Activated CD4-positive, alpha-beta memory T cell treated with anti-CD3 and anti-CD28 coated beads, Interleukin-2, amount 10 ng/mL, durations not matched to agents 7 days and 5 days (primary cell): ENCODE measurements at regions of chr13 and their contacts with region 1.

Region 1: DNA sequence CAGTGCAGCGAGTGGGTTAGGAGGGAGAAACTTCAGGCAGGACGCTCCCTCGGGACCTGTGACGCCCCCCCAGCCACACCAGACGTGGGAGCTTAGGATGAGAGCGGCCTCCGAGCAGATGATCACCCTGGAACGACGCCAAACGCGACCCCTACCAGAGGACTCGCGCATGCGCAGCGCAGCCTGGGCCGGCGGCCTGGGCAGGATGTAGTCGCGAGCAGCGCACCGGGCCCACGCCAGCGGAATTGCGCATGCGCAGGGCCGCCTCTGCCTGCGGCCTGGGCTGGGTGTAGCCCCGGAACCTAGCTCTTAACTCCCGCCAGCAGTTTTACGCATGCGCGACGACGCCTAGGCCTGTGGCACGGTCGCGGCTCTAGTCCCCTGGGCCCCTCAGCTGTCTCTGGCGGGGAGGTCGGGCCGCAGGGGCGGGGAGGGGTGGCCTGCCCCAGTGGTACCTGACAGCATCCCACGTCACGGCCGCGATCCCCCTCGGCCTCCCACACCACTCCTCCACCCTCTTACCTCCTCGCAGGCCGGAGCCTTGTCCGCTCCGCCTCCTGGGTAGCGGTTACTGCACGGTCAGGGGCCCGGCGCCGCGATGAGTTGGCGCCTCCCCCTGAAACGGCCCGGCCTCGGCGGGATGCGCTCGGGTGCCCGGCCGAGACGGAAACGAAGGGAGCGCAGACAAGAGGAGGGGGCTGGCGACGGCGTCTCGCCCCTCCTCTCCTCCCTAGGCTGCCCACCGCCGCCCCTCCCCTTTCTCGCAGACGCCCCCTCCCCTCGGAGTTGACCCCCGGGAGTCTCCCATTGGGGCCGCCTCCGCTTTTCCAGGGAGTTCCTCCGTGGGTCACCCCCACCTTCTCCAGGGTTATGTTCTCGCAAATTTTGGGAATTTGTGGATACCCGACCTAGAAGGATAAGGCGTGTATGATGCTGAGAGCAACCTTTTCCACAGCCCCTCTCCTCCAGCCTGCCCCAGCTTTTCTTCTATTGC is at the start of gene RCBTB2:
- DNase-seq: peak; percentile 99
- H3K4me3 Mint-ChIP-seq: peak within 1 kb of the TSS; percentile 93
- H3K27ac Mint-ChIP-seq: peak within 1 kb of the TSS; percentile 95
- H3K4me1 Mint-ChIP-seq: peaks cover 52% of the 10 kb centered on the region
- H3K27me3 Mint-ChIP-seq: no peaks in the 10 kb centered on the region
- total RNA-seq, gene RCBTB2: 35.6 TPM

Region 2: GRCh38 chr13:47976325-47976724 is 556.5 kb before region 1 on chr13:
- CTCF ChIA-PET with region 1: no interaction called
- POLR2A ChIA-PET with region 1: no interaction called
- DNase-seq: no peak
- H3K4me3 Mint-ChIP-seq: no peak overlapping the region
- H3K27ac Mint-ChIP-seq: no peak overlapping the region
- H3K4me1 Mint-ChIP-seq: no peaks in the 10 kb centered on the region
- H3K27me3 Mint-ChIP-seq: no peaks in the 10 kb centered on the region

Region 3: GRCh38 chr13:48400850-48401291 is 131.9 kb before region 1 on chr13:
- CTCF ChIA-PET with region 1: interaction called, 3 read pairs
- POLR2A ChIA-PET with region 1: interaction called, 22 read pairs
- DNase-seq: no peak
- H3K4me3 Mint-ChIP-seq: peak overlapping the region; percentile 38
- H3K27ac Mint-ChIP-seq: peak overlapping the region; percentile 74
- H3K4me1 Mint-ChIP-seq: peaks cover 61% of the 10 kb centered on the region
- H3K27me3 Mint-ChIP-seq: no peaks in the 10 kb centered on the region

Region 4: GRCh38 chr13:48492470-48493065 is 40.2 kb before region 1 on chr13:
- CTCF ChIA-PET with region 1: interaction called, 4 read pairs
- POLR2A ChIA-PET with region 1: interaction called, 204 read pairs
- DNase-seq: peak; percentile 85
- H3K4me3 Mint-ChIP-seq: no peak overlapping the region
- H3K27ac Mint-ChIP-seq: no peak overlapping the region
- H3K4me1 Mint-ChIP-seq: peaks cover 69% of the 10 kb centered on the region
- H3K27me3 Mint-ChIP-seq: no peaks in the 10 kb centered on the region

Region 5: GRCh38 chr13:48518083-48518482 is 14.7 kb before region 1 on chr13:
- CTCF ChIA-PET with region 1: interaction called, 3 read pairs
- POLR2A ChIA-PET with region 1: interaction called, 11 read pairs
- DNase-seq: no peak
- H3K4me3 Mint-ChIP-seq: no peak overlapping the region
- H3K27ac Mint-ChIP-seq: no peak overlapping the region
- H3K4me1 Mint-ChIP-seq: no peaks in the 10 kb centered on the region
- H3K27me3 Mint-ChIP-seq: no peaks in the 10 kb centered on the region

Region 6: DNA sequence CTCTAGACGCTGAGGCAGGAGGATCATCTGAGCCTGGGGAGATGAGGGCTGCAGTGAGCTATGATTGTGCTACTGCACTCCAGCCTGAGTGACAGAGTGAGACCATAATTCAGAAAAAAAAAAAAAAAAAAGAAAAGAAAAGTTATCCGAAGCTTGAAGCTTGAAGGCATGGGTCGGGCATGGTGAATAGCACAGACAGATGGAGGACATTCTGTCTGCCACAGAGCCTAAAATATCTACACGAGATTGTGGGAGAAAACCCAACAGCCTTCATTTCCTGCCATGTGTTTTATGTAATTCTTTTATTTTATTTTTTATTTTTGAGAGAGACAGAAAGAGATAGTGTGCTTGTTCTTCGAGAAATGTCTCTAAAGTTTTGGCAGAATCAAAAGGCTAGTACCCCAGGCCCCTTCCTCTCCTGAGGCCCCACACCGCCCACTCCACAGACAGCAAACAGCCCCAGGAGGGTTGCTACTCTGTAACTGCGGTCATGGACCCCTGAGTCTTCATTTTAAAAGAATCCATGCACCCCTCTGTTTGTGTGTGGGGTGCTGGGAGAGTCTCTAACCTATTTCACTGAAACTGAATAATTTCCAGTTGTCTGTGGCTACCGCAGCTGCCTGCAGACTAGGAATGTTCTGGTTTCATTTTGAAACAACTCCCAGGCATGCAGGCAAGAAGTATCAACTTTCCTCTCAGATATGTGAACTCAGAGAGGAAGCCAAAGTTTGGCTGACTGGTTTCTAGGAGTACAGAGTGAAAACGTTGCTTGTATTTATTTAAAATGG is 38.5 kb after region 1 on chr13:
- CTCF ChIA-PET with region 1: interaction called, 4 read pairs
- POLR2A ChIA-PET with region 1: interaction called, 17 read pairs
- DNase-seq: no peak
- H3K4me3 Mint-ChIP-seq: no peak overlapping the region
- H3K27ac Mint-ChIP-seq: no peak overlapping the region
- H3K4me1 Mint-ChIP-seq: peaks cover 47% of the 10 kb centered on the region
- H3K27me3 Mint-ChIP-seq: peaks cover 37% of the 10 kb centered on the region